Activated CD4-positive, alpha-beta memory T cell treated with anti-CD3 and anti-CD28 coated beads for 36 hours (primary cell): ENCODE measurements at regions of chr1 and their contacts with region 1.

Region 1: GRCh38 chr1:153749408-153750005 is 21.7 kb downstream of the INTS3 start:
- DNase-seq: peak; percentile 88
- H3K4me3 Mint-ChIP-seq: no peak overlapping the region
- H3K27ac Mint-ChIP-seq: no peak overlapping the region
- H3K4me1 Mint-ChIP-seq: peaks cover 3% of the 10 kb centered on the region
- H3K27me3 Mint-ChIP-seq: no peaks in the 10 kb centered on the region

Region 2: DNA sequence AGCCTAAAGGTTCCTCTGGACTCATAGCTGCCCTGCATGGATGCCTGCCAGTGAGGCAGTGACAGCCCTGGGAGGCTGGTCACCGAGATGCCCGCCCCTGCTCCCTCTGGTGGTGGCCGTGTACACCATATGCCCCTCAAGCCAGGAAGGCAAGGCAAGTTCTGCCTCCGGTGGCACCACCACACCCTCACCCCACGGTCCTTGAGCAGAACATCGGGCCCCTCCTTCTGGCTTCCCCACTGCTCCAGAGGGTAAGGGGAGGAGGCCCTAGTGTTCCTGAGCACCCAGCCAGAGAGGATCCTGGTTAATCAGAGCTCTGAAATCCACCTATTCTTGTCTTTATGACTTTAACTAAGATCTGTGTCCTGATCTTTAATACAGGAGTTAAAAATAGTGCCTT is 131.8 kb before region 1 on chr1:
- CTCF ChIA-PET with region 1: no interaction called
- POLR2A ChIA-PET with region 1: no interaction called
- intact Hi-C with region 1: no loop called
- DNase-seq: peak; percentile 80
- H3K4me3 Mint-ChIP-seq: no peak overlapping the region
- H3K27ac Mint-ChIP-seq: no peak overlapping the region
- H3K4me1 Mint-ChIP-seq: no peaks in the 10 kb centered on the region
- H3K27me3 Mint-ChIP-seq: no peaks in the 10 kb centered on the region

Region 3: DNA sequence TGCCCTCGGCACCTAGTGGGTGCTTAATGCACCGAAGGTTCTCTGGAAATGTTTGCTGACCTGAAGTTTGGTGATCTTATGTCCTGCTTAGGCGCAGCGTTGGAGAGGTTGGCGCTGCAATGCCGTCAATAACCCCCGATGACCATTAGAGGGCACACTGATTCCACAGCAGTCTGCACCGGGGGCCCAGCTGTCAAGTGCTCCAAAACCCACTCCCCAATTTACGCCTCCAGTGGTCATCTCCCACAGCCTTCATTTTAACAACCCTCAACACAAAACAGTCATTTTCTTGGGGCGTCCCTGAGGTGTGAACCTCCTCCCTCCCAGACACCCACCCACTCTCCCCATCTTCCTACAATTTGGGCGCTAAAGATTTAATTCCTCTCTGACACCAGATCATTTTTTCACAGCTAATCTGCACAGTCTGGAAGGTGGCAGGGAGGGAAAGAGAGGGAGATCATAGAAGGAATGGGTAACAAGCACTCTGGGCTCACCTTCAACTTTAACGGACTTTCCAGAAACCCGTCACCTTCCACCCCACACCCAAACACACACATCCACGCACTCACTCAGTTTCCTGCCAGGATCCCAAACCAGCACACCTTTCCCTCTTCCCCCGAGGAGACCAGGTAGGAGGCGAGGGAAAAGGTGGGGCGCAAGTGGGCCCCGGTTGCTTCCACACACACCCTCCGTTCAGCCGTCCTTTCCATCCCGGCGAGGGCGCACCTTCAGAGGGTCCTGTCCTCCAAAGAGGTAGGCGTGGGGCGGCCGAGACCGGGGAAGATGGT is 71.6 kb before region 1 on chr1:
- CTCF ChIA-PET with region 1: interaction called, 11 read pairs
- POLR2A ChIA-PET with region 1: no interaction called
- intact Hi-C with region 1: loop called (anchors 1 kb)
- DNase-seq: peak; percentile 65
- H3K4me3 Mint-ChIP-seq: peak overlapping the region; percentile 53
- H3K27ac Mint-ChIP-seq: no peak overlapping the region
- H3K4me1 Mint-ChIP-seq: peaks cover 19% of the 10 kb centered on the region
- H3K27me3 Mint-ChIP-seq: peaks cover 41% of the 10 kb centered on the region

Region 4: GRCh38 chr1:153866045-153866850 is 116.7 kb after region 1 on chr1:
- CTCF ChIA-PET with region 1: no interaction called
- POLR2A ChIA-PET with region 1: no interaction called
- intact Hi-C with region 1: no loop called
- DNase-seq: no peak
- H3K4me3 Mint-ChIP-seq: no peak overlapping the region
- H3K27ac Mint-ChIP-seq: no peak overlapping the region
- H3K4me1 Mint-ChIP-seq: peaks cover 30% of the 10 kb centered on the region
- H3K27me3 Mint-ChIP-seq: no peaks in the 10 kb centered on the region

Region 5: GRCh38 chr1:155562581-155563376 is 1813.3 kb after region 1 on chr1 and contains the start of gene ASH1L:
- CTCF ChIA-PET with region 1: no interaction called
- POLR2A ChIA-PET with region 1: no interaction called
- intact Hi-C with region 1: no loop called
- DNase-seq: peak; percentile 95
- H3K4me3 Mint-ChIP-seq: peak within 1 kb of the TSS; percentile 99
- H3K27ac Mint-ChIP-seq: peak within 1 kb of the TSS; percentile 98
- H3K4me1 Mint-ChIP-seq: peaks cover 46% of the 10 kb centered on the region
- H3K27me3 Mint-ChIP-seq: no peaks in the 10 kb centered on the region
- total RNA-seq, gene ASH1L: 28.8 to 29.6 TPM